SK-N-SH (cell line): ENCODE measurements at regions of chr6 and their contacts with region 1.

Region 1: DNA sequence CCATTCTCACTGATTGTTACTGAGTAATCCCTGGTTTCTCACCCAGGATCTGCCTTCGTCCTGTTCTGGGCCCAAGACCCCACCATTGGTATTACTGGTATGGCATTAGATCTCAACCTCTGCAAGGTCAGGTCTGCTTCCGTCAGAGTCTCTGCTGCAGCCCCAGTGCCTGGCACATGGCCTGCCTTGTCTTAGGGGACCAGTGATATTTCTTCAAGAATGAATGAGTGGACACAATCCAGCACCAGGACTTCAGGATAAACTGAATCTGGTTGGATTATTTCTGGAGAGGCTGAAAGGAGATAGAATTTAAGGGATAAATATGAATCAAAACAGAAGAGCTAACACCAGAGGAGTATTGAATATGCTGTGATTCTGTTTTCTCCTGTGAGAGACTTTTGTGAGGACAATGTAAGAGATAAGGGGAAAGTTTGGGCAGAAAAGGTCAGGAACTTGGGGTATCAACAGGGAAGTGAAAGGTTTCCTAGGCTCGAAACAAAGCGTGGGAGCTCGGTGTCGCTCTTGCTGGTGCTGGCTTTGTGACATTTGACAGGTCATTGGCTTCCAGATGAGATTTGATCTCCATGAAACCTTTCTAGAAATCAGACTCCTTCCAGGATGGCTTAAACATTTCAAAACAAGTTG is 53.9 kb downstream of the OSTM1 start:
- DNase-seq: no peak
- H3K4me3 ChIP-seq: no peak overlapping the region
- H3K27ac ChIP-seq: no peak overlapping the region
- H3K4me1 ChIP-seq: no peaks in the 10 kb centered on the region
- H3K27me3 ChIP-seq: no peaks in the 10 kb centered on the region
- CTCF ChIP-seq: no peak
- EP300 ChIP-seq: no peak
- RAD21 ChIP-seq: no peak

Region 2: GRCh38 chr6:107977283-107977682 is 43.3 kb before region 1 on chr6:
- CTCF ChIA-PET with region 1: interaction called, 14 read pairs
- POLR2A ChIA-PET with region 1: no interaction called
- DNase-seq: peak; percentile 42
- H3K4me3 ChIP-seq: no peak overlapping the region
- H3K27ac ChIP-seq: no peak overlapping the region
- H3K4me1 ChIP-seq: peaks cover 0 to 14% of the 10 kb centered on the region in 2 experiments; a peak in 2 of 4 replicates
- H3K27me3 ChIP-seq: no peaks in the 10 kb centered on the region
- CTCF ChIP-seq: peak; percentile 68
- EP300 ChIP-seq: no peak
- RAD21 ChIP-seq: peak; percentile 71